ENCODE measurements at regions of chr1 and their contacts with region 1.

Region 1: GRCh38 chr1:176252191-176252590 is 45.1 kb upstream of the COP1 start:
- DNase-seq: no peak
- ATAC-seq: no peak
- H3K4me3 ChIP-seq: no peak overlapping the region
- H3K4me3 Mint-ChIP-seq: no peak overlapping the region
- H3K27ac ChIP-seq: no peak overlapping the region
- H3K27ac Mint-ChIP-seq: no peak overlapping the region
- H3K4me1 ChIP-seq: no peaks in the 10 kb centered on the region
- H3K4me1 Mint-ChIP-seq: no peaks in the 10 kb centered on the region
- H3K27me3 ChIP-seq: no peaks in the 10 kb centered on the region
- H3K27me3 Mint-ChIP-seq: no peaks in the 10 kb centered on the region
- CTCF ChIP-seq: no peak

Region 2: GRCh38 chr1:176073524-176074157 is 178.6 kb before region 1 on chr1:
- CTCF ChIA-PET with region 1: no interaction called
- POLR2A ChIA-PET with region 1: no interaction called
- intact Hi-C with region 1: loop called in 1 of 2 experiments (anchors 5 kb)
- DNase-seq: peak in 6 of 14 experiments; percentile 4 to 65 (median 48)
- ATAC-seq: no peak
- H3K4me3 ChIP-seq: no peak overlapping the region
- H3K4me3 Mint-ChIP-seq: no peak overlapping the region
- H3K27ac ChIP-seq: no peak overlapping the region
- H3K27ac Mint-ChIP-seq: no peak overlapping the region
- H3K4me1 ChIP-seq: no peaks in the 10 kb centered on the region
- H3K4me1 Mint-ChIP-seq: peaks cover 12% of the 10 kb centered on the region
- H3K27me3 ChIP-seq: no peaks in the 10 kb centered on the region
- H3K27me3 Mint-ChIP-seq: no peaks in the 10 kb centered on the region
- CTCF ChIP-seq: peak; percentile 64